Caco-2 (cell line): ENCODE measurements at regions of chr17 and their contacts with region 1.

Region 1: DNA sequence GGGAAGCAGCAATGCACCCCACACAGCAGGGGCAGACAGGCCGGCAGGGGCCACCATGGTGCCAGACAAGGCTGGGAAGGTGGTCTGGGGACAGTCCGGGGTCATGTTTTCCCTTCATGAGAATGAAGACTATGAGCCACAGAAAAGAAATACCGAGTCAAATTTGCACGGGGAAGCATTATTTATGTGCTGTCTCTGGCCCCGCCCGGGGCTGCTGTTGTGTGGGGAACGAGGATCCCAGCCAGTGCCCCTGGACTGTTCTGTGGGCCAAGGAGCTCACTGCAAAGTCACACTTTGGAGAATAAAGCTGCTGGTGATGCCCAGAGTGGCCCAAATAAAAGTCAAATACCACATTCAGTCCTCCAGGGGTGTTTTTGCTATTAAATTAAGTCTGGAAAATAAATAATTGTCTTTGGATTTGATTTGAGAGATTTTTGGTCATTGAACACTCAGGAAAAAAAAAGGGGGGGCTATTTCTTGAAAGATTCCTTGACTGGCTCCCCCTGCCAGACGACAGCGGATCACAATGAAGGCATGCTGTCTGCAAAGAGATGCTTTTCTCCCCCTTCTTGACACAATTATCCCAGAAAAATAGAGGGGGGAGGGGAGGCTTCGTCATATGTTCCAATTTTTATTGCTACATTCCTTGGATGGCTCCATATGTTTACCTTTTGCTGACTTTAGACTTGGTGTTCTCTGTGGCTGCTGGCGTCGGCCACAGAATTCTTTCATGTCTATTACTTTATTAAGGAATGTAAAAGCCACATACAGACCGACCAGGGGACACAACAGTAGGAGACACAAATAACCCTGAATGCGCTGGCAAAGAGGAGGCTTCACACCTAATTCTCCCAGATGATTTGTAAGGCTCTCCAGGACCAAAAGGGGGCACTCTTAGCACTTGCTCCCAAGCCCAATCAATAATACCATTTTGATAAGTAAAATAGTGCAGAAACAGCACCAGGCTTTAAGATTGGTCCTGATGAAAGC is 27.1 kb upstream of the ANKFN1 start:
- DNase-seq: peak; percentile 62 to 67
- H3K4me3 ChIP-seq: no peak overlapping the region
- H3K4me3 Mint-ChIP-seq: no peak overlapping the region
- H3K27ac Mint-ChIP-seq: no peak overlapping the region
- H3K4me1 ChIP-seq: peaks cover 29% of the 10 kb centered on the region
- H3K4me1 Mint-ChIP-seq: peaks cover 8% of the 10 kb centered on the region
- H3K27me3 ChIP-seq: no peaks in the 10 kb centered on the region
- H3K27me3 Mint-ChIP-seq: no peaks in the 10 kb centered on the region
- CTCF ChIP-seq: peak; percentile 63 to 66

Region 2: DNA sequence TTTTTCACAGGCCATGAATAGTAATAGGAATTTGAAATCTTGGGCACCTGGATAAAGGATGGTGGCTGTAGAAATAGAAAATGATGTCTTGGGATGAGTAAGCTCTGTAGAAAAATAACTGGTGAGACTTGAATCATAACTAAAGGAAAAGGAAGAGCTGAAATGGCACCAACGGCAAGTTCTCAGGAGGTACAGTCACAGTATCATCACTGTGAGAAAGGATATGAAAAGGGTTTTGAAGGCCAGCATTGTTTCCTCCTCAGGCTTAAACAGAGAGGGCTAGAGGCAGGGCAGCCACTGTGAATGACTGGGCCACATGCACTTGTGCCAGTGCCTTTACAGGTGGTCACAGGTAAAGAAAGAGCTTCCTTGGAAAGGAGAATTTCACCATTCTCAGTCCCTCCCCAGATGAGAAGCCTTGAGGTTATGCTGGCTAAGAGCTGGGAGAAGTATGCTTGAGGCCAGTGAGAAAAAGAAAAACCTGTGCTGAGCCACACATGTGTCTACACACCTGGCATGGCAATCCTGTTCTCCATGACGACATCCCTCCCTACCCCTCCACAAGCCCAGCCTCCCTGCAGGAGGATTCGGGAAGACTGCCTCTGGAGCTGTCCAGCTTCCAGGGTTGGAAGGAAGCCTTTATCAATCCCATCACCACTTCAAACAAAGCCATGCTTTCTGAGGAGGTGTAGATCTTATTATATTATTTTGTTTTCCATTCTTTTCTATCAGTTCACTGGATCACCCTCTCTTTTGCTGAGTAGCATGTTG is 23.3 kb after region 1 on chr17:
- CTCF ChIA-PET with region 1: no interaction called
- POLR2A ChIA-PET with region 1: no interaction called
- intact Hi-C with region 1: loop called (anchors 1 kb)
- DNase-seq: no peak
- H3K4me3 ChIP-seq: no peak overlapping the region
- H3K4me3 Mint-ChIP-seq: no peak overlapping the region
- H3K27ac Mint-ChIP-seq: peak overlapping the region; percentile 50
- H3K4me1 ChIP-seq: peaks cover 64% of the 10 kb centered on the region
- H3K4me1 Mint-ChIP-seq: peaks cover 38% of the 10 kb centered on the region
- H3K27me3 ChIP-seq: no peaks in the 10 kb centered on the region
- H3K27me3 Mint-ChIP-seq: no peaks in the 10 kb centered on the region
- CTCF ChIP-seq: no peak

Region 3: DNA sequence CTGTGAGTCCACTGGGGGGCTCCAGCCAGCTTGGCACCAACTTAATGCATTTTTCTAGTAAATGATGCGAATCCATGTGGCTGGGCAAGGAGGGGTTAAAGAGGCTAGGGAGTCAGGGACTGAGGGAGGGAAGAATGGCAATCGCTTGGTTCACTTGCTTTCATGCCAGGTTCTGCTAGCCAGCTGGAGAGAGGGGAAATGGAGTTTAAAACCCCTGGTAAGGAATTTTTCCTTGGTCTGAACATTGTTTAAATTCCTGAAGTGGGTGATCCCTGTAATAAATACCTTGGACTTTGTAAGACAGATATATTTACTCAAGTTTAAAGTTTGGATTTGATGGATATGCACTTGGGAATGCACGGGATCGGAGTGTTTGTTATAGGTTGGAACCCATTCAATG is 50.0 kb after region 1 on chr17:
- CTCF ChIA-PET with region 1: no interaction called
- POLR2A ChIA-PET with region 1: no interaction called
- intact Hi-C with region 1: loop called (anchors 1 kb)
- DNase-seq: peak; percentile 71 to 83
- H3K4me3 ChIP-seq: no peak overlapping the region
- H3K4me3 Mint-ChIP-seq: peak overlapping the region; percentile 47
- H3K27ac Mint-ChIP-seq: peak overlapping the region; percentile 74
- H3K4me1 ChIP-seq: peaks cover 42% of the 10 kb centered on the region
- H3K4me1 Mint-ChIP-seq: peaks cover 38% of the 10 kb centered on the region
- H3K27me3 ChIP-seq: no peaks in the 10 kb centered on the region
- H3K27me3 Mint-ChIP-seq: no peaks in the 10 kb centered on the region
- CTCF ChIP-seq: no peak

Region 4: GRCh38 chr17:56244268-56244890 is 118.3 kb after region 1 on chr17:
- CTCF ChIA-PET with region 1: no interaction called
- POLR2A ChIA-PET with region 1: no interaction called
- intact Hi-C with region 1: loop called (anchors 1 kb)
- DNase-seq: peak in 1 of 2 experiments; percentile 2
- H3K4me3 ChIP-seq: no peak overlapping the region
- H3K4me3 Mint-ChIP-seq: no peak overlapping the region
- H3K27ac Mint-ChIP-seq: no peak overlapping the region
- H3K4me1 ChIP-seq: no peaks in the 10 kb centered on the region
- H3K4me1 Mint-ChIP-seq: no peaks in the 10 kb centered on the region
- H3K27me3 ChIP-seq: no peaks in the 10 kb centered on the region
- H3K27me3 Mint-ChIP-seq: no peaks in the 10 kb centered on the region
- CTCF ChIP-seq: no peak

Region 5: DNA sequence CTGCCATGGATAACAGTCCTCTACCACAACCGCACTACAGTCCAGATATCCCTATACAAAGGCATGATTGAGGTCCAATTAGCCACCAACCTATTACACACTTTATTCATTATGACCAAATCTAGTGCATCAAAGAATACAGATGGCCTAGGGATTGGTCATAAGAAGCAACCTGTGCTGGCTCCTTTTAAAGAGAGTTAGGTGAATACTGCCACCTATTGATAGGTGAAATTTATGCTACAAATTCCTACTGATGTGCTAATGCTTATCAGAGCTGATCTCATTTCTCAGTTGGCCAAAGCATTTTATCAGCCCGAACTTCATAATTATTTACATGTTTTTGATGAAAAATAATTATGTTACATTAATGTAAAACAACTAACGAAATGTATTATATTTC is 193.4 kb after region 1 on chr17:
- CTCF ChIA-PET with region 1: interaction called, 7 read pairs
- POLR2A ChIA-PET with region 1: no interaction called
- intact Hi-C with region 1: loop called (anchors 1 kb)
- DNase-seq: peak in 1 of 2 experiments; percentile 68
- H3K4me3 ChIP-seq: no peak overlapping the region
- H3K4me3 Mint-ChIP-seq: no peak overlapping the region
- H3K27ac Mint-ChIP-seq: no peak overlapping the region
- H3K4me1 ChIP-seq: no peaks in the 10 kb centered on the region
- H3K4me1 Mint-ChIP-seq: no peaks in the 10 kb centered on the region
- H3K27me3 ChIP-seq: no peaks in the 10 kb centered on the region
- H3K27me3 Mint-ChIP-seq: peaks cover 7% of the 10 kb centered on the region
- CTCF ChIP-seq: peak; percentile 64 to 65

Region 6: DNA sequence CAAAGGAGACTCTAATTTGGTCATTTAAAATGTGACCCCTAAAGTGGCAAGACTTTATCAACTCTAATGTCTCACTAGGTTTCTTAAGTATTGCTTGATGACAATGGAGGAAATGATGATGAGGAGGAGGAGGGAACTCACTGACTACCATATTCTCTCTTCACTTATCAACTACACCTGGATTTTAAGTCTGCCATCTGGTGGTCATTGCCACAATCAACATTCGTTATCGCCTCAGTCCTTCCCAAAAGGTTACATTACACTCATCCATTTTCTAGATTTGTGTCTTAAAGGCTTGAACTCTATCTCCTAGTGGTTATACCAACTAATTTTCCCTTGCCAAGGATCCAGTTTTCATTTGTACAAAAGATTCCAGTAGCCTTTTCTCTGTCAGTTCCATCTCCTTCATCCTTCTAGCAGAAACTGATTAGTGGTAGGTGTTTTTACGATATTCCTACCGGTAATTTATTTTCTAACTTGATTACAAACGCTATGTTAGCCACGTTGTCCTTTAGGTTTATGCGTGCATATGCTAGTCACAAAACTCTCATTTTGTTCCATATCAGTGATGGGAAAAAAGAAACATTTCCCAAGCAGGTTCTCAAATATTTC is 352.8 kb after region 1 on chr17:
- CTCF ChIA-PET with region 1: no interaction called
- POLR2A ChIA-PET with region 1: no interaction called
- intact Hi-C with region 1: loop called (anchors 1 kb)
- DNase-seq: peak in 1 of 2 experiments; percentile 43
- H3K4me3 ChIP-seq: no peak overlapping the region
- H3K4me3 Mint-ChIP-seq: no peak overlapping the region
- H3K27ac Mint-ChIP-seq: no peak overlapping the region
- H3K4me1 ChIP-seq: no peaks in the 10 kb centered on the region
- H3K4me1 Mint-ChIP-seq: no peaks in the 10 kb centered on the region
- H3K27me3 ChIP-seq: no peaks in the 10 kb centered on the region
- H3K27me3 Mint-ChIP-seq: peaks cover 5% of the 10 kb centered on the region
- CTCF ChIP-seq: peak; percentile 65 to 74